Activated naive CD4-positive, alpha-beta T cell treated with anti-CD3 and anti-CD28 coated beads for 36 hours (primary cell): ENCODE measurements at regions of chr6 and their contacts with region 1.

Region 1: GRCh38 chr6:3125815-3126214 is 7.3 kb downstream of the BPHL start:
- DNase-seq: no peak
- H3K4me3 Mint-ChIP-seq: no peak overlapping the region
- H3K27ac Mint-ChIP-seq: no peak overlapping the region
- H3K4me1 Mint-ChIP-seq: peaks cover 7% of the 10 kb centered on the region
- H3K27me3 Mint-ChIP-seq: no peaks in the 10 kb centered on the region

Region 2: GRCh38 chr6:2988426-2989331 is 137.1 kb before region 1 on chr6:
- CTCF ChIA-PET with region 1: no interaction called
- intact Hi-C with region 1: no loop called
- DNase-seq: peak; percentile 84
- H3K4me3 Mint-ChIP-seq: peak overlapping the region; percentile 87
- H3K27ac Mint-ChIP-seq: peak overlapping the region; percentile 97
- H3K4me1 Mint-ChIP-seq: peaks cover 12% of the 10 kb centered on the region
- H3K27me3 Mint-ChIP-seq: no peaks in the 10 kb centered on the region

Region 3: GRCh38 chr6:3162565-3163247 is 36.9 kb after region 1 on chr6:
- CTCF ChIA-PET with region 1: interaction called, 3 read pairs
- intact Hi-C with region 1: loop called (anchors 2 kb)
- DNase-seq: peak; percentile 57
- H3K4me3 Mint-ChIP-seq: peak overlapping the region; percentile 80
- H3K27ac Mint-ChIP-seq: no peak overlapping the region
- H3K4me1 Mint-ChIP-seq: peaks cover 24% of the 10 kb centered on the region
- H3K27me3 Mint-ChIP-seq: peaks cover 23% of the 10 kb centered on the region

Region 4: DNA sequence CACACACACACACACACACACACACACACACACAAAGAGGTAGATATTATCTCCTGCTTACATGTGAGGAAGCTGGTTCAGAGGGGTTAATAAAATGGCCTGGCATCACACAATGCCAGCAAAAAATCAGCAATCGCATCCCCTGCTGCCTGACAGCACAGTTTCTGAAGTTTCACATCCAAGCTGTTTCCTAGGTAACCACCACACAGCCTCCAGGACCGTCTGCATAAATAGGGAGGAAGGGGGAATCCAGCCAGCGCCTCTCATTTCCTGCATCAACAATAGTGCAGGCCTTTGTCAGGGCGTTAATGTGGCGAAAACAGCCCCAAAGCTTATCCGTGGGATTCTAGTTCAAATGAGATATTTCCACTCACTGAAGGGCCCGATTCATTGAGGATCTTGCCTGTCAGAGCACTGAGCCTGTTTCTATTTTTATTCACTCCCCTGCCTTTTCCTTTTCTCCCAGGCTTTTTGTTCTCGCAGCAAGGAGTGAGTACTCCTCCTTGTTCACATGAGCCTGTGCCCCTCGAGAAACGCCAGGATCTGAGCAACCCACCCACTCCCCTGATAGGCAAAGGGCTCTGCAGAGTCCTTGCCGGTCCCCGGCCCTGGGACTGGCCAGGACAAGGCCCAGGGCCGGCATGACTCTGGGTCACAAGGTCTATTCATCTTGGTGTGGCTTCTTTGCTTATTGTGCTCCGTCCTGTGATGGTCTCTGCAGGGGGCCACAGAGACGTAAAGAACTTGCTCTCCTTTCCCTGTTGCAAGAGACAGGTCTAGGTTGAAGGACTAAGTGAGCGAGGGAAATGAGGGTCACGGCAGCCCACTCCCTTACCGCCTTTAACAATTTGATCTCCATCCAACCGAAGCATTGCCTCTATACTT is 69.0 kb after region 1 on chr6:
- CTCF ChIA-PET with region 1: no interaction called
- intact Hi-C with region 1: loop called (anchors 1 kb)
- DNase-seq: peak; percentile 62
- H3K4me3 Mint-ChIP-seq: no peak overlapping the region
- H3K27ac Mint-ChIP-seq: no peak overlapping the region
- H3K4me1 Mint-ChIP-seq: no peaks in the 10 kb centered on the region
- H3K27me3 Mint-ChIP-seq: peaks cover 2% of the 10 kb centered on the region

Region 5: GRCh38 chr6:3251462-3252314 is 125.9 kb after region 1 on chr6:
- CTCF ChIA-PET with region 1: interaction called, 40 read pairs
- intact Hi-C with region 1: loop called (anchors 1 kb)
- DNase-seq: peak; percentile 88
- H3K4me3 Mint-ChIP-seq: no peak overlapping the region
- H3K27ac Mint-ChIP-seq: no peak overlapping the region
- H3K4me1 Mint-ChIP-seq: peaks cover 5% of the 10 kb centered on the region
- H3K27me3 Mint-ChIP-seq: peaks cover 15% of the 10 kb centered on the region

Region 6: DNA sequence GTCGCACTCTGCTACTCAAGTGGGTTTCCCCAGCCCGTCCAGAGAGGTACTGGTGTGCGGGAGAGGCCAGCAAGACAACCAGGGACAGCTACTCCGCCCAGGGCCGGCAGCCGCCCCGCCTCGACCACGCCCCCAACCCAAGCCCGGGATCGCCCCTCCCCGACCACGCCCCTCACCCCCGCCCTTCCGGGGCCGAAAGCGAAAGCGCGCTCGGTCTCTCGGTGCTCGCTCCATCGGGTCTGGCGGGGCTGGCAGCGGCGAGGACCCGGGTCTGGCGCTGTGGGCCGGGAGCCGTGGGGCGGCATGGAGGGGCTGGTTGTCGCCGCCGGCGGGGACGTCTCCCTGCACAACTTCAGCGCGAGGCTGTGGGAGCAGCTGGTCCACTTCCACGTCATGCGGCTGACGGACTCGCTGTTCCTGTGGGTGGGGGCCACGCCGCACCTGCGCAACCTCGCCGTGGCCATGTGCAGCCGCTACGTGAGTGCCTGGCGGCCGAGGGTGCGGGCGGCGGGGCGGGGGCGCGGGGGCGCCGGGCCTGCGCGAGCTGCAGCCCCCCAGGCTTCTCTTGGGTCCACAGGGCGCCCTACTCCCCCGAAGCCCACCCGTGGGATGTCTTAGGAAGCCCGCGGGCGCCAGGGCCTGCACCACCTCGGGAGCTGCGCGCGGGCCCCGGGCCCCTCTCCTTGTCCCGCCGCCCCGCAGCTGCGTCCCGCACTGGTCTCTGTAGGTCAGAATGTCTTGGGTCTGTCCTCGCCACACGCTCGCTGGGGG is 133.1 kb after region 1 on chr6 and contains the start of gene PSMG4:
- CTCF ChIA-PET with region 1: interaction called, 6 read pairs
- intact Hi-C with region 1: loop called (anchors 2 kb)
- DNase-seq: peak; percentile 94
- H3K4me3 Mint-ChIP-seq: peak within 1 kb of the TSS; percentile 94
- H3K27ac Mint-ChIP-seq: peak within 1 kb of the TSS; percentile 87
- H3K4me1 Mint-ChIP-seq: peaks cover 35% of the 10 kb centered on the region
- H3K27me3 Mint-ChIP-seq: no peaks in the 10 kb centered on the region
- total RNA-seq, gene PSMG4: 23.9 to 26.2 TPM

Region 7: DNA sequence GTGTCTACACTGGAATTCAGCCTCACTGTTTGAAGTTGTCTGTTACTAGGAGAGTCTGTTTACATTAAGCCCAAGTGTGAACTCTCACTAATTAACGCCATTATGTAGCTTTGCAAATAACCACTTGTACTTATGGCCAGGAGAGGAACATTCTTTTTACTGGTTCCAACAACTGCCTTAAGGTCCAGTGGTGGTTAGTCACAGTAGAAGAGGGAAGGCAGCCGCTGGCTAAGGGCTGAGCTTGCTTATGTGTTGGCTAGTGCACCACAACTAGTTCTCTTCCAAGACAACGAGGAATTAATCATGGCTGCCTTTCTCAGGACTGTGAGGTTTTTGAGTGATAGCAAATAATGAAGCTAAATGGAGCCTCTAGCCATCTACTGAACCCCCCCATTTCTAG is 345.9 kb after region 1 on chr6:
- CTCF ChIA-PET with region 1: no interaction called
- intact Hi-C with region 1: no loop called
- DNase-seq: no peak
- H3K4me3 Mint-ChIP-seq: no peak overlapping the region
- H3K27ac Mint-ChIP-seq: no peak overlapping the region
- H3K4me1 Mint-ChIP-seq: no peaks in the 10 kb centered on the region
- H3K27me3 Mint-ChIP-seq: no peaks in the 10 kb centered on the region

Region 8: DNA sequence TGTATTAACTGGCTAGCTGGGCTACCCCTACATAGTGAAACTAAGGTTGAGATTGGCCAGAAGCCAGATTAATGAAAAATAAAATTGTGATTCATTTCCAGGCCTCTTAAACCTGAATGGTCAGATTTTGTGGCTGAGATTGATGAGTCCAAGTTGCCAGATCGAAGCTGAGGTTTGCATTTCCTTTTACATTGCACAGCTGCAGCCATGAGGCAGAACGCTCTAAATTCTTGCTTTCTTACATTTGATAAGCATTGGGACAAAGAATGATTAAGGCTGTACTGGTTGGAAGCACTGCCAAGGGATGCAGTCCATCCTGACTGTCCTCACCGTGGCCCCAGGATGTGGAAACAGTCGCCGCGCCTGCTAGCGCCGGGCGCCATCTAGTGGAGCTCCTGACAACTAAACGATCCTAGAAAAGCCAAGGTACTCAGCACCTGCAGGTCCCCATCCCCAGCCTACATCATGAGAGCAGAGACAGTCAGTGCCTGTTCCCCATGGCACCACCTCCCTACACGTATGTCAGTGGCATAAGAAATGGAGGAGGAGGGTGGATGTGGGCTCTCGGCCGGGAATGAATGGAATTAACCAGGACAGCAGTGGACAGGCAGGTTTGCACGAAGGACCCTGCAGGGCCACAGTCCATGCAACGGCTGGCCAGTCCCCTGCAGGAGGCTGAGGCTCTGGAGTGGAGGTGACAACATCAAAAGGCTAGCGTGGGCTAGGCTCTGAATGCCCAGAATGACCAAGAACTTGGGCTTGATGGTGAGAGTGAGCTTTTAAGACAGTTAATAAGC is 606.7 kb after region 1 on chr6:
- CTCF ChIA-PET with region 1: no interaction called
- intact Hi-C with region 1: loop called (anchors 1 kb)
- DNase-seq: peak; percentile 75
- H3K4me3 Mint-ChIP-seq: no peak overlapping the region
- H3K27ac Mint-ChIP-seq: no peak overlapping the region
- H3K4me1 Mint-ChIP-seq: peaks cover 2% of the 10 kb centered on the region
- H3K27me3 Mint-ChIP-seq: peaks cover 3% of the 10 kb centered on the region